ENCODE measurements at regions of chr1 and their contacts with region 1.

Region 1: GRCh38 chr1:235866913-235867845 is 473 bp upstream of the LYST start:
- H3K4me3 Mint-ChIP-seq: peak overlapping the region; percentile 94
- H3K27ac Mint-ChIP-seq: peak overlapping the region; percentile 96
- H3K4me1 Mint-ChIP-seq: peaks cover 47% of the 10 kb centered on the region
- H3K27me3 Mint-ChIP-seq: no peaks in the 10 kb centered on the region

Region 2: DNA sequence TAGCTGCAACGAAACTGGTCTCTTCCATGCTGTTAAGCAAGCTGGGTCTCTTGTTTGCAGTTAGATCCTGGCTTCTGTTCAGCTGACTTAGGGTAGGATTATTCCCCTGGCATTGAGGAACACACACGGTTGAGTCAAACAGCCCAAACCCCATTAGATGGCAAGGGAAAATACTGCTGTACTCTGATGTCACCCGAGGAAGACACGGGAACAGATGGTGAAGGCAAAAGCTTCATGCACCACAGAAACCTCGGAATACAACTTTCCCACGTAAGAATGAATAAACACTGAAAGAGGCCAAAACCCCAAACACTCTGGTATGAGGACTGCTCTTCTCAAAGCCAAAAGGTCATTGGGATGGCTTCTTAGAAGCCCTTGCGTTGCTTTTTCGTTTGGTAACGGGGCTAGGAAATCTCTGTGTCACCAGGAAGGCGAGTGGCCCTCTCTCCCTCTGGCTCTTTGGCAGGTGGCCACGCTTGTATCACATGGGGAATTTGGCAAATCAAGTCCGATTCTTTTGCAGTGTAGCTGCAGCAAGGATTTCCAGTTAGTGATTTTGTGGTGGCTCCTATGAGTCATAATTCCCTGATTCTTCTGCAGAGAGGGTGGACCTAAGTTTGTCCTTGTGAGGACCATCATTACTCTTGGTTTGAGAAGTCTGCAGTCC is 16.2 kb after region 1 on chr1:
- intact Hi-C with region 1: loop called (anchors 2 kb)
- H3K4me3 Mint-ChIP-seq: peak overlapping the region; percentile 49
- H3K27ac Mint-ChIP-seq: peak overlapping the region; percentile 56
- H3K4me1 Mint-ChIP-seq: peaks cover 66% of the 10 kb centered on the region
- H3K27me3 Mint-ChIP-seq: peaks cover 1% of the 10 kb centered on the region

Region 3: DNA sequence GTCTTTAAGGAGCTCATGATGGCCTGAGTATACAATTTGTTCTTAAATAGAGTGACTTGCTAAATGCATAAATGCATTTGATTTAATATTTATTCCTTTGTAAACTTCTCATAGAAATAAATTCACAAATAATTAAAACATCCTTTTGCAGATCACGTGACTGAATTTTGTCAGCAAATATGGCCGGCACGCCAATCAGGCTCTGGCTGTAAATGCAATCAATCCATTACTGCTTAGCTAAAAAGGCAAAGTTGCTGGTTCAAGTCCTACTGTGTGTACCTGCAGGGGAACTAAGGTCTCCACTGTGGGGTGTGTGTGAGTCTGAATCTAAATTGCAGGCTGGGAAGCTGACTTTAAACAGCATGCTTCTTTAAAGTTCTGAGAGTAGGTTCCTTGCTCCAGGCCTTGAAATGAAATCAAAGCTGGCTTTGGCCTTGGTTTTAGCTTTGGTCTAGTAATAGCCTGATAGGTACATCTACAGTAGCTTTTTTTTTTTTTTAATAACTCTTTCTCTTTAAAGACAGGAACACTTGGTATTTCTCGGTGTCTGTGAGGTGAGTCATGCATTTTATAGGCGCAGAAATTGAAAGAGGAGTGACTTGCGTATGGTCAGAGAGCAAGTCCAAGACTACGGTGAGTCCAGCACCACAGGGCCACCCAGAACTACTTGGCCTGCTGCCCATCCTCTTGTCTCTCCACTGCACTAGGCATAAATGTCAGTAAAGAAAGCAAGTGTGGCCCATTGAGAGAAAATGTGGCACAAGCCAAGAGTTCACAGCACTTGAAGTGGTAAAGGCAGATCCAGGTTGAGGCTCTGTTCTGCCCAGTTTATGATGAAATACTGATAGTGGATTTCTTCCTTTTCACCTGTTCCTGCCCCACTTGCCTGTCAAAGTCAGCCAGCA is 35.7 kb after region 1 on chr1:
- intact Hi-C with region 1: loop called (anchors 5 kb)
- H3K4me3 Mint-ChIP-seq: no peak overlapping the region
- H3K27ac Mint-ChIP-seq: no peak overlapping the region
- H3K4me1 Mint-ChIP-seq: peaks cover 47% of the 10 kb centered on the region
- H3K27me3 Mint-ChIP-seq: no peaks in the 10 kb centered on the region

Region 4: DNA sequence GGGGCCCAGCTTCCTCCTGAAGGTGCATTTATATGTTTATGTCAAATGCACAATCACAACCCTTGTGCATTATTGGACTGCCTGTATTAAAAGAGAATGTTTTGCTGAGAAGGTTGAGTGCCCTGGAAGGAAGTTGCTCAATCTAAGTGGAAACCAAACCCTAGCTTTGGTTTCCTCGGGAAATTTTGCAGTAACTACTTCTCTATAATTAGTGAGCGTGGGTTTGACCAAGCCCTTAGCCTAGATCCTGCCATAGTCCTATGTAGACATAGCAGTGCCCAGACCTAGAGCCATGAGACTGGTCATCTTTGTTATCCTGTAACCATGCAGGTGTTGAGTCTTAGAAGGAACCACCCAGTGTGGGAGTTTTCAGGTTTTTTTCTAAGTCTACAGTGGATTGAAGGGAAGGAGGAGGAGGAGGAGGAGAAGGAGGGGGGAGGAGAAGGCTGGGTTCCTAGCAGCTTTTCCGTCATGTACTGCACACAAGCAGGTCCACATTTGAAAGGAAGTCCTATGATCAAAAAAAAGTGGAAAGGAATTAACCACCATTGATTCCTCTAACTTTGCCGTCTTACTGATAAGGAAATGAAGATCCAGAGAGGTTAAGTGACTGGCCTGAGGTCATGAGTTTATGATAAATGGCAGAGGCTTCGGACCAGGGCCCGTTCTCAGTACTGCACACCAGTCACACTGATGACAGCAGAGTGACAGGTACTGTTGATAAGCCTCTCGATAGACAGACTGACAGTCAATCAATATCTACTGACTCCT is 71.7 kb after region 1 on chr1:
- intact Hi-C with region 1: loop called (anchors 10 kb)
- H3K4me3 Mint-ChIP-seq: peak overlapping the region; percentile 13
- H3K27ac Mint-ChIP-seq: peak overlapping the region; percentile 77
- H3K4me1 Mint-ChIP-seq: peaks cover 92% of the 10 kb centered on the region
- H3K27me3 Mint-ChIP-seq: peaks cover 13% of the 10 kb centered on the region

Region 5: GRCh38 chr1:236576004-236576403 is 708.8 kb after region 1 on chr1:
- intact Hi-C with region 1: no loop called
- H3K4me3 Mint-ChIP-seq: no peak overlapping the region
- H3K27ac Mint-ChIP-seq: no peak overlapping the region
- H3K4me1 Mint-ChIP-seq: no peaks in the 10 kb centered on the region
- H3K27me3 Mint-ChIP-seq: no peaks in the 10 kb centered on the region